ENCODE measurements at regions of chr20 and their contacts with region 1.

Region 1: GRCh38 chr20:46767127-46767761 is 57.8 kb downstream of the SLC2A10 start:
- DNase-seq: peak; percentile 72
- H3K4me3 Mint-ChIP-seq: no peak overlapping the region
- H3K27ac Mint-ChIP-seq: no peak overlapping the region
- H3K4me1 Mint-ChIP-seq: peaks cover 6% of the 10 kb centered on the region
- H3K27me3 Mint-ChIP-seq: no peaks in the 10 kb centered on the region
- CTCF ChIP-seq: peak; percentile 68

Region 2: DNA sequence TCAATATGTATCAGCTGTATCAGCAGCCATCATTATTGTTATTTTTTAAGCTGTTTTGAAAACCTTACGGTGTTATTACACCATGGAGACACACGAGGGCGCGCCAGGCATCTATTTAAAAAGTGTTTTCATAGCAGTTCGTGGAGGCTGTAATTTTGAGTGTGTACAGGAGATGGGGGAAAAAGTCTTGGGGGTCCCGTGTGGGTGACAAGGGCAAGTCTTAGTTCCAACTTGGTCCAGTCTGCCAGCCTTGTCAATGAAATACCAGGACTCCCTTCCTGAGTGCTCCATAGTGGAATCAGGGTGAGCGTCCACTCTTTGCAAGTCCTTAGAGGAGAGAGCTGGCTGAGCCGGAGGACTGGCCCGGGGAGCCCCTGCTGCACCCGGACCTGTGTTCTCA is 14.5 kb before region 1 on chr20:
- CTCF ChIA-PET with region 1: interaction called, 50 read pairs
- POLR2A ChIA-PET with region 1: interaction called, 3 read pairs
- intact Hi-C with region 1: no loop called
- DNase-seq: peak; percentile 61
- H3K4me3 Mint-ChIP-seq: no peak overlapping the region
- H3K27ac Mint-ChIP-seq: no peak overlapping the region
- H3K4me1 Mint-ChIP-seq: peaks cover 5% of the 10 kb centered on the region
- H3K27me3 Mint-ChIP-seq: peaks cover 15% of the 10 kb centered on the region
- CTCF ChIP-seq: peak; percentile 59

Region 3: GRCh38 chr20:46787991-46788762 is 20.9 kb after region 1 on chr20:
- CTCF ChIA-PET with region 1: no interaction called
- POLR2A ChIA-PET with region 1: no interaction called
- intact Hi-C with region 1: no loop called
- DNase-seq: no peak
- H3K4me3 Mint-ChIP-seq: no peak overlapping the region
- H3K27ac Mint-ChIP-seq: no peak overlapping the region
- H3K4me1 Mint-ChIP-seq: no peaks in the 10 kb centered on the region
- H3K27me3 Mint-ChIP-seq: peaks cover 21% of the 10 kb centered on the region
- CTCF ChIP-seq: no peak

Region 4: GRCh38 chr20:47020231-47020630 is 253.0 kb after region 1 on chr20:
- CTCF ChIA-PET with region 1: interaction called, 5 read pairs
- POLR2A ChIA-PET with region 1: no interaction called
- intact Hi-C with region 1: loop called (anchors 1 kb)
- DNase-seq: no peak
- H3K4me3 Mint-ChIP-seq: no peak overlapping the region
- H3K27ac Mint-ChIP-seq: no peak overlapping the region
- H3K4me1 Mint-ChIP-seq: no peaks in the 10 kb centered on the region
- H3K27me3 Mint-ChIP-seq: peaks cover 47% of the 10 kb centered on the region
- CTCF ChIP-seq: no peak

Region 5: GRCh38 chr20:47150403-47151152 is 383.3 kb after region 1 on chr20:
- CTCF ChIA-PET with region 1: interaction called, 3 read pairs
- POLR2A ChIA-PET with region 1: interaction called, 3 read pairs
- intact Hi-C with region 1: loop called (anchors 1 kb)
- DNase-seq: peak; percentile 88
- H3K4me3 Mint-ChIP-seq: no peak overlapping the region
- H3K27ac Mint-ChIP-seq: no peak overlapping the region
- H3K4me1 Mint-ChIP-seq: peaks cover 5% of the 10 kb centered on the region
- H3K27me3 Mint-ChIP-seq: no peaks in the 10 kb centered on the region
- CTCF ChIP-seq: peak; percentile 57

Region 6: DNA sequence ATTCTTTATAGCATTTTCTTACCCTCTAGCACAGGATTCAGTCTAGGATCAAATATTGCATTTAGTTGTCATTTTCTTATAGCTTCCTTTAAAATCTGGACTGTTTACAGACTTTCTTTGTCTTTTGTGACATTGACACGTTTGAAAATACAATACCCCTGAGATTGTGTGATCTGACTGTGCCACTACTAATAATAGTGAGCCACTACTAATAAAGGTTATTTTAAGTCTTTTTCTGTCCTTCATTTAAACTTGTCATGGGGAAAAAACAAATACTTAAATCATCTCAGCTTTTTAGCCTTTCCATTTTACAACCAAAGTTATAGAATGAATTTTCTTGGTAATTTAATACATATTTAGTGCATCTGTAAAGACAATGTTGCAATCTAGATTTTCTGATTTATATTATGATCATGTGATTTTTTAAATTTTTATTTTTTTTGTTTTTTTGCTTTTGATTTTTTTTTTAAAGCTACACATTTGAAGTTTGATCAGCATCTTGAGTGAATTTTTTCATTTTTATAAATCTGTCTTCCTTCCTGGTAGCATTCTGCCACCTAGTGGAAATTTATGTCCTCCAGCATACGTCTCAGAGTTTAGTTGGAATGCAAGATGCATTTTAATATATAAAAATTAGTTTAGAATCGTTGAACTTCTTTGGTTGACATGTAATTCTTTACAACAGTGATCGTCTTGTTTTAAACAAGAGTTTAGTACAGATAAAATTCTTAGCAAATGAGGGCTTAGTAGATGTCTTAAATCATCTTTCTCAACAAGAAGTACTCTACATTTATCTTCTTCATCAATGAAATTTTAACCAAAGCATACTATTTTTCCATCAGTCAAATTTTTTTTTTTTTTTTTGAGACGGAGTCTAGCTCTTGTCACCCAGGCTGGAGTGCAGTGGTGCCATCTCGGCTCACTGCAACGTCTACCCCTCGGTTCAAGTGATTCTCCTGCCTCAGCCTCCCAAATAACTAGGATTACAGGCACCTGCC is 853.9 kb after region 1 on chr20:
- CTCF ChIA-PET with region 1: interaction called, 5 read pairs
- POLR2A ChIA-PET with region 1: no interaction called
- intact Hi-C with region 1: loop called (anchors 5 kb)
- DNase-seq: peak; percentile 53
- H3K4me3 Mint-ChIP-seq: no peak overlapping the region
- H3K27ac Mint-ChIP-seq: peak overlapping the region; percentile 19
- H3K4me1 Mint-ChIP-seq: peaks cover 12% of the 10 kb centered on the region
- H3K27me3 Mint-ChIP-seq: no peaks in the 10 kb centered on the region
- CTCF ChIP-seq: peak; percentile 72